ENCODE measurements at regions of chr2 and their contacts with region 1.

Region 1: DNA sequence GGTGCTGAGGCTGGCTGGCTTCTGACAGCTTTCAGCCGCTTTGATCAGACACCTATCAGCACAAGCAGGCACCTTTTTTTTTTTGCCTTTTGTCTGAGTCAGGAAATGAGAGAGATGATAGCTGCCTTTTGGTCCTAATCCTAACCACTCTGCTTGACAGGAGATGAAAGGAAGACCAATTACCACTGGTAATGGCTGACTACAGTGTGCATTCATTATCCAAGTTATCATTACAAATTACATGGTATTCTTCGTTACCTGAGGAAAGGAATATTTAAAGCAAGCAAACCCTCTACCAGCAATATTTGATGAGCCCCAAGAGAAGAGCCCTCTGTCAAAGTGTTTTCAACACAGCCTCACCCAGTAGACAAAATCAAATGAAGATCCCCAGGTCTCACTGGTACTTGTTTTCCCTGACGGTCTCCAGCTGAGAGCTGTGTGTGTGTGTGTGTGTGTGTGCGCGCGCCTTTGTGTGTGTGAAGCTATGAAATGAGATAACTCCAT is 925.7 kb downstream of the DCDC2C start:
- DNase-seq: no peak
- ATAC-seq: no peak
- H3K4me3 ChIP-seq: no peak overlapping the region
- H3K27ac ChIP-seq: no peak overlapping the region
- H3K4me1 ChIP-seq: no peaks in the 10 kb centered on the region
- H3K27me3 ChIP-seq: peaks cover 0 to 7% (median 0%) of the 10 kb centered on the region in 7 donors
- CTCF ChIP-seq: no peak

Region 2: GRCh38 chr2:6474161-6475140 is 1845.4 kb after region 1 on chr2:
- intact Hi-C with region 1: loop called in 1 of 10 experiments (anchors 10 kb)
- DNase-seq: no peak
- ATAC-seq: no peak
- H3K4me3 ChIP-seq: no peak overlapping the region
- H3K27ac ChIP-seq: no peak overlapping the region
- H3K4me1 ChIP-seq: no peaks in the 10 kb centered on the region
- H3K27me3 ChIP-seq: peaks cover 0 to 36% (median 13%) of the 10 kb centered on the region in 7 donors
- CTCF ChIP-seq: no peak

Measured in heart right ventricle (tissue), 16 donors.